PC-9 (cell line): ENCODE measurements at regions of chr11 and their contacts with region 1.

Region 1: DNA sequence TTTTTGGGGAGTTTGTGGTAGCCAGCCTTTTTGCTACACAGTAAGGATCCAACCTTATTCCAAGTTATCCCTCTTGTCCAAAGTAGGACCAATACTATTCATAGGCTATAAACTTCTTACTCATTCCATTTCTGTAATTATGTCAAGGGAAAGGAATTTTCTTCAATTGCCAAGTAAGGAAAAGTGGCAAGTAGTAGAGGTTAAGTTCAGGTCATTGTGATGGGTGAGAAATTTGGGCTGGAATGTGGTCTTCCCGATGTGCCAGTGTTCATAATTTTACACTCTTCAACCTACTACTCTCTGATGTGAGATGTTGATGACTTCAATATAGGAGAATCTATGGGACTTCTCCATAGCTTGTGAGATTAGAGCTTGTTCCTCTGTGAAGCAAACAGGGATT is 648.8 kb downstream of the METTL15 start:
- DNase-seq: peak; percentile 33 to 49
- H3K4me3 ChIP-seq: peak overlapping the region; percentile 15; the same call in 1 of the 2 replicates
- H3K27ac ChIP-seq: peak overlapping the region; percentile 37; the same call in 1 of the 2 replicates
- H3K4me1 ChIP-seq: peaks cover 28% of the 10 kb centered on the region
- H3K27me3 ChIP-seq: no peaks in the 10 kb centered on the region
- CTCF ChIP-seq: no peak

Region 2: GRCh38 chr11:28343276-28344233 is 413.4 kb before region 1 on chr11:
- CTCF ChIA-PET with region 1: no interaction called
- POLR2A ChIA-PET with region 1: no interaction called
- intact Hi-C with region 1: loop called (anchors 2 kb)
- DNase-seq: peak; percentile 38 to 61
- H3K4me3 ChIP-seq: no peak overlapping the region
- H3K27ac ChIP-seq: peak overlapping the region; percentile 81
- H3K4me1 ChIP-seq: peaks cover 37% of the 10 kb centered on the region
- H3K27me3 ChIP-seq: no peaks in the 10 kb centered on the region
- CTCF ChIP-seq: no peak

Region 3: DNA sequence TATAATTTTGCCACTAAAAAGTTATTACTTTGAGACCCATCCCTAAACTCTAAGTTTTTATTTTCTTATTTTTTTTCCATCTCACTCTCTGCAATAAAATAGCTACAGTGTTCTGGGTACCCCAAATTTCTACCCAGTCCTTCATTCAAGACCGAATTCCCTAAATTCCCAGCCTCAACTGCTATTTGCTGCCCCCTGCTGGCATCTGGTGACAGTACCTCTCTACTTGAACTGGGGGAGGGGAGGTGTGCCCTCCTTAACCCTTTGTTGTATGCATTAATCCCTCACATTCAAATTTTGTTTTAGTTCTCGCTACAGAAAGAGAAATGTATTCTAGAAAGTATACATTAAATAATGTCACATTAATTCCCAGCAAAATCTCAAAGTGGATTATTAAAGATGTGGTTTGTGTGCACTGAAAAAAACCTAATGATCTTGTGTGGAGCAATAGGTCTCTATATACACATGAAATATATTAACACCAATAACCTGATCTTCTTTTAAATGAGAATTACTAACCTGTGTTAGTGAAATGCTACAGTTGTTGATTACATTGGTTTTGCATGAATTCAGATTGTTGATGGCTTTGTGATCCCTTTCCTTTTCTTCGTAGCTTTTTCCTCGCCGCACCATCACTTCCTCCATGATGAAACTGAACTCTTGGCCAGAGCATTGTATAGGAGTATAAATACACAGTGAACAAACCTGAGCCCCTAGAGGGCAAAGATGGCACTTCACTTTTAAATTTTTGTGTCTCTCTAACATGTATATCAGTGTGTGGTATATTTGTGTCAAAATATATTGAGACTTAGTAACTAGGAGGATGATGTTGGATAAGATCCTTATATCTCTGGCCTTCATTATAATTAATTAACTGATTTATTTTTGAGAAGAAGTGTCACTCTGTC is 58.8 kb before region 1 on chr11:
- CTCF ChIA-PET with region 1: no interaction called
- POLR2A ChIA-PET with region 1: interaction called, 8 read pairs
- intact Hi-C with region 1: loop called (anchors 1 kb)
- DNase-seq: peak in 1 of 2 experiments; percentile 37
- H3K4me3 ChIP-seq: no peak overlapping the region
- H3K27ac ChIP-seq: no peak overlapping the region
- H3K4me1 ChIP-seq: peaks cover 24% of the 10 kb centered on the region
- H3K27me3 ChIP-seq: no peaks in the 10 kb centered on the region
- CTCF ChIP-seq: peak; percentile 81

Region 4: GRCh38 chr11:28836285-28837081 is 79.5 kb after region 1 on chr11:
- CTCF ChIA-PET with region 1: interaction called, 6 read pairs
- POLR2A ChIA-PET with region 1: interaction called, 9 read pairs
- intact Hi-C with region 1: loop called (anchors 1 kb)
- DNase-seq: peak; percentile 35 to 61
- H3K4me3 ChIP-seq: no peak overlapping the region
- H3K27ac ChIP-seq: peak overlapping the region; percentile 43; the same call in 1 of the 2 replicates
- H3K4me1 ChIP-seq: 0 out of 2 replicates have a peak, but pooled peaks cover 10% of the 10 kb centered on the region
- H3K27me3 ChIP-seq: no peaks in the 10 kb centered on the region
- CTCF ChIP-seq: no peak

Region 5: GRCh38 chr11:29019960-29020683 is 263.1 kb after region 1 on chr11:
- CTCF ChIA-PET with region 1: no interaction called
- POLR2A ChIA-PET with region 1: no interaction called
- intact Hi-C with region 1: loop called (anchors 1 kb)
- DNase-seq: peak in 1 of 2 experiments; percentile 26
- H3K4me3 ChIP-seq: no peak overlapping the region
- H3K27ac ChIP-seq: no peak overlapping the region
- H3K4me1 ChIP-seq: peaks cover 6% of the 10 kb centered on the region; the same call in 1 of the 2 replicates
- H3K27me3 ChIP-seq: no peaks in the 10 kb centered on the region
- CTCF ChIP-seq: peak; percentile 31; the same call in 1 of the 2 replicates

Region 6: GRCh38 chr11:29173660-29174062 is 416.7 kb after region 1 on chr11:
- CTCF ChIA-PET with region 1: no interaction called
- POLR2A ChIA-PET with region 1: no interaction called
- intact Hi-C with region 1: loop called (anchors 5 kb)
- DNase-seq: peak in 1 of 2 experiments; percentile 45
- H3K4me3 ChIP-seq: no peak overlapping the region
- H3K27ac ChIP-seq: no peak overlapping the region
- H3K4me1 ChIP-seq: no peaks in the 10 kb centered on the region
- H3K27me3 ChIP-seq: no peaks in the 10 kb centered on the region
- CTCF ChIP-seq: no peak

Region 7: GRCh38 chr11:29328961-29329441 is 572.0 kb after region 1 on chr11:
- CTCF ChIA-PET with region 1: no interaction called
- POLR2A ChIA-PET with region 1: no interaction called
- intact Hi-C with region 1: loop called (anchors 2 kb)
- DNase-seq: peak in 1 of 2 experiments; percentile 40
- H3K4me3 ChIP-seq: no peak overlapping the region
- H3K27ac ChIP-seq: no peak overlapping the region
- H3K4me1 ChIP-seq: no peaks in the 10 kb centered on the region
- H3K27me3 ChIP-seq: no peaks in the 10 kb centered on the region
- CTCF ChIP-seq: peak; percentile 73